PC-3 (cell line): ENCODE measurements at regions of chr17 and their contacts with region 1.

Region 1: GRCh38 chr17:66951935-66952662 is 12.4 kb upstream of the CACNG4 start:
- DNase-seq: peak; percentile 100
- ATAC-seq: peak; percentile 95
- H3K4me3 ChIP-seq: peak overlapping the region; percentile 46
- H3K27ac ChIP-seq: peak overlapping the region; percentile 94
- H3K4me1 ChIP-seq: peaks cover 44% of the 10 kb centered on the region
- H3K27me3 ChIP-seq: no peaks in the 10 kb centered on the region
- CTCF ChIP-seq: no peak

Region 2: DNA sequence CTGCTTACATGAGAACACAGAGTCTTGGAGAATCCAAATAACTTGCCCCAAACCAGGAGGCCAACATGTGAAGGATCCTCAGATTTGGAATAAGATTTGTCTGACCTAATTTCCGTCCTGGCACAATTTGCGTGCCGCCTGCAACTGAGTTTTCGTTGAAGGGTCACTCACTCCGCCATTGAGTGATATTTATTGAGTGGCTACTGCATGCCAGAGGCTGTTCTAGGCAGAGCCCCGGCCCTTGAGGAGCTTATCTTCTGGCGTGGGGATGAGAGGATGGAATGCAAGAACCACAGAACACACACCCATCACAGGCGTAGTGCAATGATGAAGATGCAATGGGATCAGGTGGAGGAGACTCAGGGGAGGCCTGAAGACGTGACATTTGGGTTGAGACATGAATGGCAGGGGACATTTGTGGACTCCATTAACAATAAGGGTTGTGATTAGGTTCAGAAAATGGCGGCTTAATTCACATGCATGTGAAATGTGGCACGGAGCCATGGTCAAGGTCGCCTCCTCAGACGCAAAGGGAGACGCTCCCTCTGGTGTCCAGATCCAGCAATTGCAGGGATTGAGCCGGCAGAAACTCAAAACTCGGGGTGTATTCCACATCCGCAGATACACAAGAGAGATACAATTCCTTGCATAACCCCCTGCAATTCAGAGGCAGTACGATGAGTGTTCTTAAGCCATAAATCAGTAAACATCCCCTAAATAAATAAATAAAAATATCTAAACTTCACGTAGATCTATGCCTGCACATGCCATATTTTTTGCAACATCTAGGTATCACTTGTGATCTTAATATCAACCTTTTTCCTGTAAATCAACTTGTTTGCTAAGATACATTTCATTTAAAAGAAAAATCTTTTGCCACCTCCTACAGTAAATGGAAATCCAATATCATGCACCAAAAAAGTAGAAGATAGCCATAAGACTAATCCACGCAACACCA is 45.5 kb before region 1 on chr17:
- CTCF ChIA-PET with region 1: no interaction called
- POLR2A ChIA-PET with region 1: no interaction called
- intact Hi-C with region 1: loop called (anchors 1 kb)
- DNase-seq: peak; percentile 90
- ATAC-seq: peak; percentile 23
- H3K4me3 ChIP-seq: no peak overlapping the region
- H3K27ac ChIP-seq: no peak overlapping the region
- H3K4me1 ChIP-seq: peaks cover 14% of the 10 kb centered on the region
- H3K27me3 ChIP-seq: no peaks in the 10 kb centered on the region
- CTCF ChIP-seq: peak; percentile 96